ENCODE measurements at regions of chr4 and their contacts with region 1.

Region 1: GRCh38 chr4:169940450-169940849 is 85.7 kb downstream of the MFAP3L start:
- DNase-seq: peak in 1 of 2 experiments; percentile 3
- H3K4me3 ChIP-seq: no peak overlapping the region
- H3K27ac ChIP-seq: no peak overlapping the region
- H3K4me1 ChIP-seq: peaks cover 13% of the 10 kb centered on the region
- H3K27me3 ChIP-seq: no peaks in the 10 kb centered on the region
- CTCF ChIP-seq: no peak

Region 2: GRCh38 chr4:169619959-169620879 is 320.2 kb before region 1 on chr4 and contains the start of gene CLCN3:
- CTCF ChIA-PET with region 1: no interaction called
- POLR2A ChIA-PET with region 1: no interaction called
- intact Hi-C with region 1: loop called (anchors 10 kb)
- DNase-seq: peak; percentile 87 to 94
- H3K4me3 ChIP-seq: peak within 1 kb of the TSS; percentile 72
- H3K27ac ChIP-seq: peak within 1 kb of the TSS; percentile 85
- H3K4me1 ChIP-seq: peaks cover 18% of the 10 kb centered on the region
- H3K27me3 ChIP-seq: no peaks in the 10 kb centered on the region
- CTCF ChIP-seq: no peak
- total RNA-seq, gene CLCN3: 38.8 and 51.6 TPM in 2 replicates

Region 3: GRCh38 chr4:169899295-169899694 is 41.2 kb before region 1 on chr4:
- CTCF ChIA-PET with region 1: no interaction called
- POLR2A ChIA-PET with region 1: no interaction called
- intact Hi-C with region 1: loop called (anchors 2 kb)
- DNase-seq: peak; percentile 20 to 57
- H3K4me3 ChIP-seq: no peak overlapping the region
- H3K27ac ChIP-seq: no peak overlapping the region
- H3K4me1 ChIP-seq: no peaks in the 10 kb centered on the region; the same call in 1 of the 2 replicates
- H3K27me3 ChIP-seq: no peaks in the 10 kb centered on the region
- CTCF ChIP-seq: no peak

Region 4: GRCh38 chr4:169993531-169993930 is 53.1 kb after region 1 on chr4:
- CTCF ChIA-PET with region 1: no interaction called
- POLR2A ChIA-PET with region 1: interaction called, 10 read pairs
- intact Hi-C with region 1: no loop called
- DNase-seq: no peak
- H3K4me3 ChIP-seq: no peak overlapping the region
- H3K27ac ChIP-seq: no peak overlapping the region
- H3K4me1 ChIP-seq: peaks cover 12% of the 10 kb centered on the region
- H3K27me3 ChIP-seq: no peaks in the 10 kb centered on the region
- CTCF ChIP-seq: no peak

Region 5: GRCh38 chr4:170027181-170027829 is 86.9 kb after region 1 on chr4:
- CTCF ChIA-PET with region 1: no interaction called
- POLR2A ChIA-PET with region 1: no interaction called
- intact Hi-C with region 1: loop called (anchors 2 kb)
- DNase-seq: peak; percentile 63 to 92
- H3K4me3 ChIP-seq: peak overlapping the region; percentile 75; the same call in 1 of the 2 replicates
- H3K27ac ChIP-seq: peak overlapping the region; percentile 50; the same call in 1 of the 2 replicates
- H3K4me1 ChIP-seq: no peaks in the 10 kb centered on the region
- H3K27me3 ChIP-seq: no peaks in the 10 kb centered on the region
- CTCF ChIP-seq: no peak